ENCODE measurements at regions of chr17 and their contacts with region 1.

Region 1: GRCh38 chr17:58284320-58285067 is 3.8 kb upstream of the MPO start:
- DNase-seq: no peak
- ATAC-seq: 0 out of 6 replicates have a peak, but pooled peaks of 1 of the 2 experiments have one; percentile 20
- H3K4me3 ChIP-seq: no peak overlapping the region
- H3K27ac ChIP-seq: no peak overlapping the region
- H3K4me1 ChIP-seq: no peaks in the 10 kb centered on the region; the same call in 2 of the 3 replicates
- CTCF ChIP-seq: no peak
- EP300 ChIP-seq: no peak
- POLR2A ChIP-seq: no peak
- RAD21 ChIP-seq: no peak

Region 2: GRCh38 chr17:58096892-58097291 is 187.6 kb before region 1 on chr17:
- CTCF ChIA-PET with region 1: no interaction called
- POLR2A ChIA-PET with region 1: no interaction called
- DNase-seq: no peak
- ATAC-seq: peak in 1 of 2 experiments; percentile 75; a peak in 3 of 6 replicates
- H3K4me3 ChIP-seq: no peak overlapping the region
- H3K27ac ChIP-seq: no peak overlapping the region
- H3K4me1 ChIP-seq: no peaks in the 10 kb centered on the region
- CTCF ChIP-seq: no peak
- EP300 ChIP-seq: no peak
- POLR2A ChIP-seq: no peak
- RAD21 ChIP-seq: no peak

Region 3: DNA sequence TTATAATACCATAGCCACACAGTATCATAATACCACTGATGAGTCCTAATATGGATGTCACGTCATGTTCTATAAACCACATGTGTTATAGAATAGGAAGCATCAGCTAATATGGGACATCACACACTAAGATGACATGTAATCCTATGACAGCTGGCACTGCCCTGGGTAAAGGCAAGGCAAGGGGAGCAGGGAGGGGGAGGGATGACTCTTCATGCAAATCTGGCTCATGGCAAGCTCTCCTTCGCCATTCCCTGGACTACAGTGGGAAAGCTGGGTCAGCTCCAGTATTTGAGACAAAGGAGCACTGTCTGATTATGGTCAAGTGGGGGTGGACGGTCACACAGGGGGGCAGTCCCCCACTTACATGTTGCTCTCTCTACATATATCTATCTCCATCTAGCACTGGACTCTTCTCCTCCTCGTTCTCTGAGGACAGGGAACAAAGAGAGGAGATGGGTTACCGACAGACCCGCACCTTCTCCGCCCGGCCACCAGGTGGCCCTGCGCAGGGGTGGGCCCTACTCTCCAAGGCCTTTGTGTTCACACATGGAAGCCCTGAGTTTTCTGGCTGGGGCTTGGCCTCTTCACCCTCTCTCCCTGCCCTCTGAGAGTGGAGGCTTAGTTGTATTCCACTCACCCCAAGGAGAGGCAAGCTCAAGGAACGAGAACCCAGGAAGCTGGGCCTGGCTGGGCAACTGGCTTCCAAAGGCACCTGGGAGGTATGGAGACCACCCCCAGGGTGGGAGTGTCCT is 19.7 kb after region 1 on chr17:
- CTCF ChIA-PET with region 1: interaction called, 12 read pairs
- POLR2A ChIA-PET with region 1: no interaction called
- DNase-seq: peak; percentile 63 to 93
- ATAC-seq: peak; percentile 70 to 90; a peak in 5 of 6 replicates
- H3K4me3 ChIP-seq: no peak overlapping the region
- H3K27ac ChIP-seq: no peak overlapping the region
- H3K4me1 ChIP-seq: no peaks in the 10 kb centered on the region
- CTCF ChIP-seq: peak; percentile 59
- EP300 ChIP-seq: no peak
- POLR2A ChIP-seq: no peak
- RAD21 ChIP-seq: peak; percentile 30 to 55; a peak in 3 of 5 replicates